Gastrocnemius medialis (tissue), 4 donors: ENCODE measurements at regions of chr3 and their contacts with region 1.

Region 1: DNA sequence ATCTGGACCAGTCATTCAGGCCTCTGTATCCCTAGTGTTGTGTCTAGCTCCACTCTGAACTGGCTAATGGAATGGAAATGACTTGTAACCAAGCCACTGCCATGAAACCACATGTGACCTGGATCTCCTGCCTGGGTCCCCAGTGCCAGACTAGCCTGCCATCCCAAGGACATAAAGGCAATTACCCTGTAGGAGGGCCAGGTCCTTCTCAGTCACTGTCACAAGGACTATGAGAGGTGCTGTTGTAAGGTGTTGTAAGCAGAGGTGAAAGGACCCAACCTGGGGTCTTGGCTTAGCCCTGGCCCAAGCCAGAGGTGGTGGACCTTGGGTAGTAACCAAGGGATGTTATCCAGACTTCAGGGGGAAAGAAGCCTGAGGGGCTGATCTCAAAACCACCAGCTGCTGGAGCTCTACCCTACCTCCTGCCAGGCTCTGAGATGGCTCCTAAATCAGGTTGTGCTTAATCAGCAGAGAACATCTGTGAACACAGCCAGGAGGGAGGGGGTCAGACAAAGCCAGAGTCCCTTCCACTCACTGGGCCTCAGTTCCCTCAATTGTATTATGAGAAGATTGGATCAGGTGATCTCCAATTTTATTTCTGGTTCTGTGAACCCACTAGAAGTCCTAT is 15.7 kb upstream of the KLHL24 start:
- DNase-seq: peak; percentile 24 to 46
- ATAC-seq: peak; percentile 79 to 81
- H3K4me3 ChIP-seq: no peak overlapping the region
- H3K27ac ChIP-seq: peak overlapping the region; percentile 33 to 62 (median 46)
- H3K4me1 ChIP-seq: peaks cover 12 to 17% of the 10 kb centered on the region in 2 donors
- H3K27me3 ChIP-seq: no peaks in the 10 kb centered on the region
- CTCF ChIP-seq: no peak
- POLR2A ChIP-seq: no peak

Region 2: DNA sequence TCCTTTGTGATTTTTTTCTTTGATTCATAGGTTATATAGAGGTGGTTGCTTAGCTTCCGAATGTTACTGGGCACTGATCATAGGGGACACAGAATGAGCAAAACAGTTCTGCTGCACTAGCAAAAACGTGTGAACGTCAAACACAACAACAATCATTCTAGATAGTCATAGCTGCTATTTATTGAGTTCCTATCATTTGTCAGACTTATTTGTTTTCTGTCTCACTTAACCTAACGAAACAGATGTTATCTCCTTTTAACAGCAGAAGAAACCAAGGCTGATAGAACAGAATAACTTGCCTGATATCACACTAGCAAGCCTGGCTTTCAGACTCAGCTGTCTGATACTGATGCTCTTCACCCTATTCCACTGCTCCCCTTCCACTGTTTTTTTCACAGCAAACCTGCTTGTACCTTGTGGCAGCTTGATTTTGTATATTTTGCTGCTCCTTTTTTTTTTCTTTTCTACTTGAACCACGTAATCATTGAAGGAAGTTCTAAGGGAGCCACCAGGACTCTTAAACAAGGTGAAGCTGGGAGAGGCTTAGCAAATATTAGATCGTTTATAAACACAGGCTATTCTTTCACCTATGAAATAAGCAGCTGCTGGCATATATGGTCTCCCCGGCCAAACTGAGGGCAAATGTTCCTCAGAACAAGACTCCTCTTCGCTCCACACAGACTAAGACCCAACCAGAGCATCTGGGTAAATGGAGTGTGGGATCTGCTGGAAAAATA is 270.1 kb before region 1 on chr3:
- in situ Hi-C with region 1: no loop called
- intact Hi-C with region 1: no loop called
- DNase-seq: no peak
- ATAC-seq: no peak
- H3K4me3 ChIP-seq: no peak overlapping the region
- H3K27ac ChIP-seq: no peak overlapping the region
- H3K4me1 ChIP-seq: no peaks in the 10 kb centered on the region
- H3K27me3 ChIP-seq: no peaks in the 10 kb centered on the region
- CTCF ChIP-seq: no peak
- POLR2A ChIP-seq: no peak

Region 3: DNA sequence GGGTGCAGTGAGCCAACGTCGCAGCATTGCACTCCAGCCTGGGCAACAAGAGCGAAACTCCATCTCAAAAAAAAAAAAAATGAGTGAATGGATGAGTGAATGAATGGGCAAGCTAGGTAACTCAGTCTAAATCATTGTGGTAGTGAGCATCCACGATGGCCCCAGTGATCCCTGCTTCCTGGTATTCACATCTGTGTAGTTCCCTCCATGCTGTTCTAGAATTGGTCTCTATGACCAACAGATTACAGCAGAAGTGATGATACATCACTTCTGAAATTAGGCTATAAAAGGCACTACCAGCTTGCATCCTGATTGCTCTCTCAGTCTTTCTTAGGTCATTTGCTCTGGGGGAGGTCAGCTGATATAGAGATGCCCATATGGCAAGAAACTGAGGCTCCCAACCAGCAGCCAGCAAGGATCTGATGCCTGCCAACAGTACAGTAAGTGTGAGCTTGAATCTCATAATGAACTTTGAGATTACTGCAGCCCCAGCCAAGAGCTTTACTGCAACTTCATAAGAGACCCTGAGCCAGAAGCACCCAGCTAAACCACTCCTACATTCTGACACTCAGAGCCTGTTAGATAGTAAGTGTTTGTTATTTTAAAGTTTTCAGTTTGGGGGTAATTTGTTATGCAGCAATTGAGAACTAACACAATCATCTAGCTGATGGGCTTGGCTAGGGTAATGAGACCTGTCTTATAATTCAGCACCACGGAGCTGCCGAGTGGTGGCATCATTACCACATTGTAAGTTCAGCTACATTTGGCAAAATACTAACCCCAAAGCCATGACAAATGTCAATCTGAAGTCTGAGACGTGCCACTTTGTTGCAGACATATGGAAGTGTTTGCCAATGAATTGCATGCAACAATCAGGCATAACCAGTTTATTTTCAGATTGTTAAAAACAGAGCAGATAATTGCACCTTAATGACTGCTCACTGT is 117.2 kb before region 1 on chr3:
- in situ Hi-C with region 1: no loop called
- intact Hi-C with region 1: loop called (anchors 5 kb)
- DNase-seq: peak; percentile 16 to 41
- ATAC-seq: peak; percentile 74 to 88
- H3K4me3 ChIP-seq: no peak overlapping the region
- H3K27ac ChIP-seq: no peak overlapping the region
- H3K4me1 ChIP-seq: peaks cover 4 to 20% of the 10 kb centered on the region in 2 donors
- H3K27me3 ChIP-seq: no peaks in the 10 kb centered on the region
- CTCF ChIP-seq: peak in 4 of 5 experiments; percentile 13 to 55 (median 32)
- POLR2A ChIP-seq: no peak

Region 4: GRCh38 chr3:183584246-183584913 is 35.4 kb before region 1 on chr3:
- in situ Hi-C with region 1: no loop called
- intact Hi-C with region 1: loop called (anchors 5 kb)
- DNase-seq: peak; percentile 20 to 41
- ATAC-seq: peak; percentile 73 to 86
- H3K4me3 ChIP-seq: no peak overlapping the region
- H3K27ac ChIP-seq: peak overlapping the region; percentile 70 to 74 (median 74)
- H3K4me1 ChIP-seq: peaks cover 54 to 55% of the 10 kb centered on the region in 2 donors
- H3K27me3 ChIP-seq: no peaks in the 10 kb centered on the region
- CTCF ChIP-seq: no peak
- POLR2A ChIP-seq: no peak

Region 5: GRCh38 chr3:183594636-183595035 is 25.1 kb before region 1 on chr3:
- in situ Hi-C with region 1: no loop called
- intact Hi-C with region 1: no loop called
- DNase-seq: no peak
- ATAC-seq: no peak
- H3K4me3 ChIP-seq: no peak overlapping the region
- H3K27ac ChIP-seq: no peak overlapping the region
- H3K4me1 ChIP-seq: no peaks in the 10 kb centered on the region
- H3K27me3 ChIP-seq: no peaks in the 10 kb centered on the region
- CTCF ChIP-seq: no peak
- POLR2A ChIP-seq: no peak

Region 6: DNA sequence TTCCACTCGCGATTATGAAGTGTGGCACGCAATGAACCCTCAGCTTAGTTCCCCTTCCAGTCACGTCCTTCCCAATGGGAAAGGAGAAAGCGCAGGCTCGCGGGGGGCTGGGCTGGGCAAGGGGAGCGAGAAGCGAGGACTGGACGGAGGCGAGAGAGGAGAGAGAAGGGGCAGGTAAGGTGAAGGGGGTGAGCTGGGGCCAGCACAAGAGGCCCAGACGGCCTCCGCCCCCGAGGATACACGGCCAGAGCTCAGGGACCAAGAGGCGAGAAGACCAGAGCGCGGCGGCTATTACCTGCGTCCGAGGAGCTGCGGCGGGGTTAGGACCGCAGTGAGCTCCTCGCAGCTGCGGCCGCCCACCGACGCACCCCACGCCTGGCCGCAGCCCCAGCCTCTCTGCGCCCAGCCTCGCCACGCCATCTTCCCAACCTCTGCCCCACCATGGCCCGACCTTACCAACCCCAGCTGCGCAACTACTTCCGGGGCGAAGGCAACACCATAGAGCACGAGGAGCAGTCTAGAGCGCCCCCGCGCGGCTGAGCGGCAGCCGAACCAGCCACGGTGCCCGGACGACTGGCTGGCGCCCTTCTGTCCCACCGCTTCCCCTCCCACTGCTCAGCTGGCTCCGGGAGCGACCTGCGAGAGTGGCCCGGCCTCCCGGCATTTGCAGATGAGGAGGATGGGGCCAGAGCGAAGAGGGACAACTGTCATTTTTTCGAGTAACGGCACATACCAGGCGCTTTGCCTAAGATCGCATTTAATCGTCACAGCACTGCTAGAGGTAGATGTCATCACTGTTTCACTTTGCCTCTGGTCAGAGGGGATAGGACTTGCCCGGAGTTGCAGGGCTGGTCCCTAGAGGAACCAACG is 264.9 kb after region 1 on chr3 and contains the start of gene PARL:
- in situ Hi-C with region 1: no loop called
- intact Hi-C with region 1: no loop called
- DNase-seq: peak; percentile 93 to 94
- ATAC-seq: peak; percentile 98 to 99
- H3K4me3 ChIP-seq: peak within 1 kb of the TSS; percentile 83 to 96 (median 92)
- H3K27ac ChIP-seq: peak within 1 kb of the TSS; percentile 77 to 90 (median 88)
- H3K4me1 ChIP-seq: peaks cover 20 to 23% of the 10 kb centered on the region in 2 donors
- H3K27me3 ChIP-seq: no peaks in the 10 kb centered on the region
- CTCF ChIP-seq: peak; percentile 93 to 96 (median 96)
- POLR2A ChIP-seq: peak; percentile 43 to 72
- total RNA-seq, gene PARL: 30.5 to 49.5 (median 41.3) TPM